Thyroid gland (tissue), 4 donors: ENCODE measurements at regions of chr1 and their contacts with region 1.

Region 1: GRCh38 chr1:154974063-154974807 is at the start of gene CKS1B:
- DNase-seq: peak; percentile 97 to 98
- H3K4me3 ChIP-seq: peak within 1 kb of the TSS; percentile 16 to 73 (median 51)
- H3K27ac ChIP-seq: peak within 1 kb of the TSS; percentile 95 to 99 (median 98)
- H3K4me1 ChIP-seq: peaks cover 37 to 51% of the 10 kb centered on the region in 2 donors
- H3K27me3 ChIP-seq: no peaks in the 10 kb centered on the region
- CTCF ChIP-seq: no peak
- POLR2A ChIP-seq: peak in 1 of 2 donors; percentile 55
- total RNA-seq, gene CKS1B: 14.3 to 29.5 (median 22.6) TPM

Region 2: GRCh38 chr1:154784924-154785531 is 189.2 kb before region 1 on chr1:
- intact Hi-C with region 1: no loop called
- DNase-seq: peak in 1 of 2 donors; percentile 23
- H3K4me3 ChIP-seq: no peak overlapping the region
- H3K27ac ChIP-seq: no peak overlapping the region
- H3K4me1 ChIP-seq: peaks cover 0 to 10% of the 10 kb centered on the region in 2 donors
- H3K27me3 ChIP-seq: no peaks in the 10 kb centered on the region
- CTCF ChIP-seq: no peak
- POLR2A ChIP-seq: no peak

Region 3: GRCh38 chr1:155050560-155051341 is 76.5 kb after region 1 on chr1 and contains the start of gene ADAM15:
- intact Hi-C with region 1: loop called (anchors 5 kb)
- DNase-seq: peak; percentile 70 to 77
- H3K4me3 ChIP-seq: peak within 1 kb of the TSS; percentile 54 to 56 (median 55)
- H3K27ac ChIP-seq: peak within 1 kb of the TSS; percentile 67 to 84 (median 83)
- H3K4me1 ChIP-seq: peaks cover 9 to 28% of the 10 kb centered on the region in 2 donors
- H3K27me3 ChIP-seq: no peaks in the 10 kb centered on the region
- CTCF ChIP-seq: peak; percentile 64 to 87 (median 74)
- POLR2A ChIP-seq: no peak
- total RNA-seq, gene ADAM15: 51.3 to 75.5 (median 65.6) TPM